ENCODE measurements at regions of chr10 and their contacts with region 1.

Region 1: DNA sequence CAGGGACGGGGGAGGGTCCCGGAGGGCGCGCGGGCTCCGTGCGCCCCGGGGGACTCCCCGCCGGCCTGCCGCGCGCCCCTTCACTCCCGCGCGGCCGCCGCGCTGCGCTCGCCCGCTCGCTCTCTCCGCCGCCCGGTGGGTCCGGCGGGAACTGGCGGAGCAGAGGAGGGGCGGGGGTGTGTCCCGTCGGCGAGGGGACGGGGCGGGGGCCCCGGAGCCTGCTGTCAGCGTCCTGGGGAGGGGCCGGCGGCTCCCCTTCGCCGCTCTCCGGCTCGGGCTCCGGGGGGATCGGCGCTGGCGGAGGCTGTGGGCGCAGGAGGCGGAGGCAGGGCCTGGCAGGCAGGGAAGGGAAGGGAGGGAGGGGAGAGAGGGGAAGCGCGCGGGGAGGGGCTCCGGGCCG is at the start of gene SH3PXD2A:
- DNase-seq: peak in 12 of 35 experiments; percentile 2 to 22 (median 10)
- ATAC-seq: peak; percentile 47 to 70 (median 59)
- H3K4me3 ChIP-seq: peak within 1 kb of the TSS; percentile 48 to 85
- H3K4me3 Mint-ChIP-seq: peak within 1 kb of the TSS; percentile 77 to 86 (median 80)
- H3K27ac ChIP-seq: no peak within 1 kb of the TSS
- H3K27ac Mint-ChIP-seq: peak within 1 kb of the TSS in 1 of 2 donors; percentile 2
- H3K4me1 ChIP-seq: peaks cover 6 to 20% of the 10 kb centered on the region in 2 experiments
- H3K4me1 Mint-ChIP-seq: peaks cover 0 to 20% (median 17%) of the 10 kb centered on the region in 3 donors
- H3K27me3 ChIP-seq: peaks cover 0 to 35% of the 10 kb centered on the region in 2 experiments
- H3K27me3 Mint-ChIP-seq: peaks cover 30 to 33% of the 10 kb centered on the region in 2 donors
- total RNA-seq, gene SH3PXD2A: 5.8 to 11.8 (median 9.8) TPM

Region 2: DNA sequence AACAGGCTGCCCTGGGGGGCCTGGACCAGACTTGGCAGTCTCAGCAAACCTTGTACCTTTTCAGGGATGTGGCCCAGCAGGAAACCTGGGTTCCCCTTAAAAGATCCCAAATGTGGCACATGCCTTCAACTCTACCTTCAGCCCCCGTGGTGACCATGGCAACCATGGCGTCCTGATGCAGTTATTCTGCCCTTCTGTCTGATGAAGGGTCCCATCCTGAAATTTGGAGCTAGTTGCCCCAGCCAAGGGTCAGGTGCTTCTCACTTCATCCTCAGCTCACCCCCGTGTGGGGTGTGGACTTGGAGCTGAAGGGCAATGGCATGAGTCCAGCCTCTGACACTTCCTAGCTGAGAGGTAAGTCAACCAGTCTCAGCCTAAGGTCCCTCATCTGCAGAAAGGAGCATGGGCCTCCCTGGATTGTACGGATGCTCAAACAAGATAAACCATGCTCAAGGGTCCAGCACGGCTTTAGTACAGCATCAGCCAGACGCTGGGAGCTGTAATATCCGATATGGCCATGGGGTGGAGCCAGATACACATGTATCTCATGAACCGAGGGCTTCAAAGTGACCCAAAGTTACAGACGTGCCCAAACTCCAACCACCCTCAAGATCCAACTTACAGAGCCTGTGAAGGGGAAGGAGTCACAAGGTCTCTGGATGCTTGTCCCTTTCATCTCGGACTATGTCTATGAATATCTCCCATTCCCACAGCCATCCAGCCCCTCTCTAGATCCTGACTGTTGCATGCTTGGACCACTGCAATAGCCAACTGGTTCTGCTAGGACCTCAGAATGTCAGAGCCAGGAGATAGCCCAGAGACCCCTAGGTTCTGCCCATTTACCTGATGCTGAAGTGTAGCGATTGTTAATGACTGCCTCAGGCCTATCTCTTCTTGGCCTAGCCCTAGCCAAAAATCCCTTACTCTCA is 142.6 kb before region 1 on chr10:
- CTCF ChIA-PET with region 1: interaction called, 9 to 10 read pairs
- POLR2A ChIA-PET with region 1: no interaction called
- DNase-seq: peak; percentile 27 to 87 (median 72)
- ATAC-seq: peak; percentile 82 to 86 (median 83)
- H3K4me3 ChIP-seq: no peak overlapping the region
- H3K4me3 Mint-ChIP-seq: no peak overlapping the region
- H3K27ac ChIP-seq: no peak overlapping the region
- H3K27ac Mint-ChIP-seq: no peak overlapping the region
- H3K4me1 ChIP-seq: peaks cover 0 to 4% of the 10 kb centered on the region in 2 experiments
- H3K4me1 Mint-ChIP-seq: no peaks in the 10 kb centered on the region
- H3K27me3 ChIP-seq: peaks cover 0 to 19% of the 10 kb centered on the region in 2 experiments
- H3K27me3 Mint-ChIP-seq: no peaks in the 10 kb centered on the region

Region 3: DNA sequence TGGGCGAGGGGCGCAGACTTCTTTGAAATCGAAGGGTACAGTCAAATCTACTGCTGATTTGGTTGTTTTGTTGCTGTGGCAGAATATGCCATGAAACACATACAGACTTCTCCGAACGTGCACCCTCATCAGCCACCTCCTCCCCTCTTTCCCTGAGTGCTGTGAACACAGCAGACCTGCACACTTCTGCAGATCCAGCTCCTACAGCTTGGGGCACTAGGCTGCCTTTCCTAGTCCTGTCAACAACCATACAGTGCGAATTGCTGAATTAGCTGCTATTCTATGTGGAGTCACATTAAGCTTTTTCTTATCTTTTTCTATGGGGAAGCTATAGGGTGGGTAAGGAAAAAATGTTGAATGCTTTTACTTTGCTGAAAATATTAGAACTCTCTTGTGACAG is 172.7 kb after region 1 on chr10:
- CTCF ChIA-PET with region 1: no interaction called
- POLR2A ChIA-PET with region 1: no interaction called
- DNase-seq: peak in 12 of 35 experiments; percentile 9 to 37 (median 14)
- ATAC-seq: peak; percentile 63 to 78 (median 70)
- H3K4me3 ChIP-seq: no peak overlapping the region
- H3K4me3 Mint-ChIP-seq: no peak overlapping the region
- H3K27ac ChIP-seq: no peak overlapping the region
- H3K27ac Mint-ChIP-seq: peak overlapping the region in 1 of 2 donors; percentile 53
- H3K4me1 ChIP-seq: peaks cover 0 to 2% of the 10 kb centered on the region in 2 experiments
- H3K4me1 Mint-ChIP-seq: peaks cover 0 to 16% (median 0%) of the 10 kb centered on the region in 3 donors
- H3K27me3 ChIP-seq: no peaks in the 10 kb centered on the region
- H3K27me3 Mint-ChIP-seq: no peaks in the 10 kb centered on the region